Activated T-helper 1 cell treated with anti-CD3 and anti-CD28 coated beads, Interleukin-12 subunit alpha, Interleukin-12 subunit beta, Interleukin-2, Interleukin-4 antibody, amounts not matched to agents 30 ng/mL and 10 ng/mL and 1 ng/mL, durations not matched to agents 14 hours and 24 hours and 36 hours (primary cell): ENCODE measurements at regions of chr21 and their contacts with region 1.

Region 1: GRCh38 chr21:14545906-14546480 is at the start of gene SAMSN1:
- DNase-seq: peak; percentile 73
- H3K4me3 Mint-ChIP-seq: peak within 1 kb of the TSS; percentile 98
- H3K27ac Mint-ChIP-seq: peak within 1 kb of the TSS; percentile 92
- H3K4me1 Mint-ChIP-seq: peaks cover 81% of the 10 kb centered on the region
- H3K27me3 Mint-ChIP-seq: no peaks in the 10 kb centered on the region
- total RNA-seq, gene SAMSN1: 115 and 119 TPM in 2 replicates

Region 2: GRCh38 chr21:14382835-14383594 is 163.0 kb before region 1 on chr21 and contains the start of gene HSPA13:
- intact Hi-C with region 1: loop called (anchors 2 kb)
- DNase-seq: peak; percentile 99
- H3K4me3 Mint-ChIP-seq: peak within 1 kb of the TSS; percentile 100
- H3K27ac Mint-ChIP-seq: peak within 1 kb of the TSS; percentile 100
- H3K4me1 Mint-ChIP-seq: peaks cover 52% of the 10 kb centered on the region
- H3K27me3 Mint-ChIP-seq: peaks cover 2% of the 10 kb centered on the region
- total RNA-seq, gene HSPA13: 43.6 and 50.4 TPM in 2 replicates

Region 3: GRCh38 chr21:14533504-14534428 is 12.2 kb before region 1 on chr21:
- intact Hi-C with region 1: loop called (anchors 1 kb)
- DNase-seq: peak; percentile 22
- H3K4me3 Mint-ChIP-seq: peak overlapping the region; percentile 86
- H3K27ac Mint-ChIP-seq: peak overlapping the region; percentile 99
- H3K4me1 Mint-ChIP-seq: peaks cover 79% of the 10 kb centered on the region
- H3K27me3 Mint-ChIP-seq: no peaks in the 10 kb centered on the region

Region 4: DNA sequence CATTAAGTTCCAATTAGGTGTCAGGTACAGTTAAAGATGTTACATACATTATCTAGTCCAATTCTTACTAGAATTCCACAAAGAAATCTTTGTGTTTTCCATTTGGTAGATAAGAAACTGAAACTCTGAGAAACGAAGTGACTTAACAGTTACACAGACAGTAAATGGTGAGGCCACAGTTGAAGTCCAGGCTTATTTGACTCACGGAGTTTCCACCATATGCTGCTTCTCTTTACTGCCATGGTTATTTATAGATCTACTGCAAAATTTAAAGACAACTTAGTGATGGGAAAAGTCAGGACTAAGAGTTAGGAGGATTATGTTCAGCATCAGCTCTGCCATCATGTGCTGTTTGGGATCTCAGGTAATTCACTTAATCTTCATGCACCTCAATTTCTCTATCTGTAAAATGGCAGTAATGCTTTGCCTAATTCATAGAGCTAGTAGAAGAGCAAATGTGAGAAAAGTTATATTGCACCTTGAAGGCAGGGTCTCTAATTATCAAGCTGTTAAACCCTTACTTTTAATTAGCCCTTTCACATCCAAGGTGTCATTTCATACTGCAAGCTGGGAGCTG is 26.3 kb after region 1 on chr21:
- intact Hi-C with region 1: loop called (anchors 1 kb)
- DNase-seq: no peak
- H3K4me3 Mint-ChIP-seq: peak overlapping the region; percentile 67
- H3K27ac Mint-ChIP-seq: peak overlapping the region; percentile 89
- H3K4me1 Mint-ChIP-seq: peaks cover 60% of the 10 kb centered on the region
- H3K27me3 Mint-ChIP-seq: no peaks in the 10 kb centered on the region

Region 5: DNA sequence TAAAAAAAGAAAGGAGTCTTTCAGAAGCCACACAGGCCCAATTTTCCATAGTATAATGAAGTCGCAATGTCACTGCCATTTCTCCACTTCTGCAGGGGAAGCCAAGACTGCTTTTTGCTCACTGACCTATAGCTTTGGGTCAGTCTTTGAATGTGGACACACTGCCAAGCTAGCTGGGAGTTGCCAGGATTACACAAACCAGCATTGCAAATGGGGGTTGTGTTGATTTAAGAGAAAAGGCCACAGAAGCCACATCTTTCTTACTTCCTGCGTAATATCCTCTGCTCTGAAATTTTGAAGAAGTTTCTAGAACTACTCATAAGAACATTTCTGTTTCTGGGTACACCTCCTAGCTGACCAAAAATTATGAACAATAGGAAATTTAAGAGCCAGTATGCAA is 45.9 kb after region 1 on chr21:
- intact Hi-C with region 1: loop called (anchors 1 kb)
- DNase-seq: no peak
- H3K4me3 Mint-ChIP-seq: no peak overlapping the region
- H3K27ac Mint-ChIP-seq: peak overlapping the region; percentile 83
- H3K4me1 Mint-ChIP-seq: peaks cover 54% of the 10 kb centered on the region
- H3K27me3 Mint-ChIP-seq: no peaks in the 10 kb centered on the region

Region 6: DNA sequence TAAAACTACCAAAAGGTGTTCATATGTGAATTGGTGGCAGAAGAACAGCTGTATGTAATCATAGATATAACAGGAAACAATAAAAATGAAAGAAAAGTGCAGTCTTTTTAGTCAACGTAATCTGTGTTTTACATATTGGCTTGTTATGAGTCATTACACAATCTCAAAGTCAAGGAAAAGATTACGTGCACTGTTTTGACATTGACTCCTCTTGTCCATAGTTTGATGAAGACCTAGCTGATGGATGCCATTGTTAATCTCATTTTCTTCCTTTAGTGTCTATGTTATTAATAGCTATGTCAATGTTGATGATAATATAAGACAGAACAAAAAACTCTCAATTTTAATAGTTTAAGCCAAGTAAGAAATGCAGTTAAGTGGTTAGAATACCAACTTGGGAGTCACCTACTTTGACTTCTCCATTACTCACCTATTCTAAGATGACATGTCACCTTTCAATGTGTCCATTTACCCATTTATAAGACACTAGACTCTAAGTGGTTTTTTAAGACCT is 84.6 kb after region 1 on chr21:
- intact Hi-C with region 1: loop called (anchors 1 kb)
- DNase-seq: no peak
- H3K4me3 Mint-ChIP-seq: no peak overlapping the region
- H3K27ac Mint-ChIP-seq: peak overlapping the region; percentile 72
- H3K4me1 Mint-ChIP-seq: peaks cover 14% of the 10 kb centered on the region
- H3K27me3 Mint-ChIP-seq: peaks cover 2% of the 10 kb centered on the region

Region 7: GRCh38 chr21:14645702-14646101 is 99.7 kb after region 1 on chr21:
- intact Hi-C with region 1: no loop called
- DNase-seq: no peak
- H3K4me3 Mint-ChIP-seq: no peak overlapping the region
- H3K27ac Mint-ChIP-seq: no peak overlapping the region
- H3K4me1 Mint-ChIP-seq: no peaks in the 10 kb centered on the region
- H3K27me3 Mint-ChIP-seq: no peaks in the 10 kb centered on the region

Region 8: DNA sequence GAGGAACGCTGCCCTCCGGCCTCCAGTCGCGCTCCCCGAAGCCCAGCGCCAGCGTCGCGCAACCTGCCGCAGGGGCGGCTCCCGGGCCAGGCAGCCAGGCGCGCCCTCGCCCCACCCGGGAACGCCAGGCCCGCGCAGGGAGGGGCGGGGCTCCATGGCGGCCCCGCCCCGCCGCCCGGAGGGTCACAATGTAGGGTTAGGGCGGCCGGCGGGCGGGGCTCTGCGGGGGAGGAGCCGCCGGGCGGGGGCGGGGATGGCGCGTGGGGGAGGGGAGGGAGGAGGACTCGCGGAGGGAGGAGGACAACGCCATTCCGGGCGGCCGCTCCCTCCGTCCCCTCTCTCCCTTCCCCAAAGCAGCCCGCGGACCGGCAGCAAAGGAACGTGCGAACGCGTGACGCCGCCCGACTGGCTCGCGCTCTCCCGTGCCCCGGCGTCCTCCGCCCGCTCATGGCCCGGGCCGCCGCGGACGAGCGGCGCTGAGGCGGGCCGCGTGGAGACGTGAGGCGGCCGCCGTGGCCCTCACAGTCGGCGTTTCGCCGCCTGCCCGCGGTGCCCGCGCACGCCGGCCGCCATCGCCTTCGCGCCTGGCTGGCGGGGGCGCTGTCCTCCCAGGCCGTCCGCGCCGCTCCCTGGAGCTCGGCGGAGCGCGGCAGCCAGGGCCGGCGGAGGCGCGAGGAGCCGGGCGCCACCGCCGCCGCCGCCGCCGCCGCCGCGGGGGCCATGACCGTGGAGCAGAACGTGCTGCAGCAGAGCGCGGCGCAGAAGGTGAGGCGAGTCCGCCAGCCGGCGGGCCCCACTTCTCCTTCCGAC is 1183.9 kb after region 1 on chr21 and contains the start of gene USP25:
- intact Hi-C with region 1: loop called (anchors 2 kb)
- DNase-seq: peak; percentile 80
- H3K4me3 Mint-ChIP-seq: peak within 1 kb of the TSS; percentile 93
- H3K27ac Mint-ChIP-seq: peak within 1 kb of the TSS; percentile 91
- H3K4me1 Mint-ChIP-seq: peaks cover 40% of the 10 kb centered on the region
- H3K27me3 Mint-ChIP-seq: peaks cover 31% of the 10 kb centered on the region
- total RNA-seq, gene USP25: 25.6 and 26.8 TPM in 2 replicates